ENCODE measurements at regions of chr2 and their contacts with region 1.

Region 1: GRCh38 chr2:72350852-72351251 is 203.2 kb upstream of the CYP26B1 start:
- DNase-seq: no peak
- H3K4me3 ChIP-seq: no peak overlapping the region
- H3K27ac ChIP-seq: no peak overlapping the region
- H3K4me1 ChIP-seq: peaks cover 0 to 4% (median 1%) of the 10 kb centered on the region in 4 experiments; a peak in 2 of 7 replicates
- H3K27me3 ChIP-seq: no peaks in the 10 kb centered on the region
- CTCF ChIP-seq: no peak
- EP300 ChIP-seq: no peak
- POLR2A ChIP-seq: no peak
- RAD21 ChIP-seq: no peak

Region 2: DNA sequence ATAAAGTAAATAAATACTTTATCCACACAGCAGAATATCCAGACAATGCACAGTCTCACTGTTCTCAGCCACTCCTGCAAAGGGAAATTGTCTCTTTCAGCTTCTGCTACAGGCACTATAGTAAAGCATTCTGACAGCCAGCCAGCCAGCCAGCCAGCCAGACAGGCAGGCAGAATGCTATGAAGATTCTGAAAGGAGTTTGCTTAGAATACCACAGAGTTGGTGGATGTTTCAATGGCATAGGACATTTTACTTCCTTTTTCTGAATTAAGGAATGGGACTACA is 87.1 kb before region 1 on chr2:
- CTCF ChIA-PET with region 1: no interaction called
- POLR2A ChIA-PET with region 1: no interaction called
- DNase-seq: no peak
- H3K4me3 ChIP-seq: no peak overlapping the region
- H3K27ac ChIP-seq: no peak overlapping the region
- H3K4me1 ChIP-seq: no peaks in the 10 kb centered on the region
- H3K27me3 ChIP-seq: no peaks in the 10 kb centered on the region
- CTCF ChIP-seq: no peak
- EP300 ChIP-seq: no peak
- POLR2A ChIP-seq: no peak
- RAD21 ChIP-seq: no peak

Region 3: DNA sequence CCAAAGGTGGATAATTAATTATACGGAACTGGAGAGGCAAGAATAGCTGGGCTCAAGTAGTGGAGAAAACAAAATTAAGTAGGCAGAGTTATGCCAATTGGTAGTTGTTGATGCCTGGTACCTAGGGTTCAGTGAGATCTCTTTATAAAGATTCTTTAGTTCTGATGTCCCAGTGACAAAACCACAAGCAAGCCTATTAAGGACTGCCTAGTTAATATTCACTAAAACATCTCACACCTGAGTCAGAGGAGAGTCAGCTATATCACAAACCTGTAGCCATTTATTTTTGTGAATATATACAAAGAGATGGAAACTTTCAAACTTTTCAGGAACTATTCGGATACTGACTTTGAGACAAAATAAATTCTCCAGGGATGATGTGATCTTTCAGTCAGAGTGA is 10.7 kb after region 1 on chr2:
- CTCF ChIA-PET with region 1: interaction called, 10 read pairs
- POLR2A ChIA-PET with region 1: interaction called, 3 read pairs
- DNase-seq: no peak
- H3K4me3 ChIP-seq: no peak overlapping the region
- H3K27ac ChIP-seq: no peak overlapping the region
- H3K4me1 ChIP-seq: no peaks in the 10 kb centered on the region
- H3K27me3 ChIP-seq: no peaks in the 10 kb centered on the region
- CTCF ChIP-seq: no peak
- EP300 ChIP-seq: no peak
- POLR2A ChIP-seq: no peak
- RAD21 ChIP-seq: no peak

Measured in H1 (cell line).